Activated T-helper 1 cell treated with anti-CD3 and anti-CD28 coated beads, Interleukin-12 subunit alpha, Interleukin-12 subunit beta, Interleukin-2, Interleukin-4 antibody, amounts not matched to agents 30 ng/mL and 10 ng/mL and 1 ng/mL, durations not matched to agents 14 hours and 24 hours and 36 hours (primary cell): ENCODE measurements at regions of chr12 and their contacts with region 1.

Region 1: GRCh38 chr12:123150744-123151456 is at the start of gene PITPNM2:
- DNase-seq: peak; percentile 56
- H3K4me3 Mint-ChIP-seq: peak within 1 kb of the TSS; percentile 89
- H3K27ac Mint-ChIP-seq: peak within 1 kb of the TSS; percentile 90
- H3K4me1 Mint-ChIP-seq: peaks cover 41% of the 10 kb centered on the region
- H3K27me3 Mint-ChIP-seq: peaks cover 16% of the 10 kb centered on the region
- total RNA-seq, gene PITPNM2: 22.3 and 25.5 TPM in 2 replicates

Region 2: DNA sequence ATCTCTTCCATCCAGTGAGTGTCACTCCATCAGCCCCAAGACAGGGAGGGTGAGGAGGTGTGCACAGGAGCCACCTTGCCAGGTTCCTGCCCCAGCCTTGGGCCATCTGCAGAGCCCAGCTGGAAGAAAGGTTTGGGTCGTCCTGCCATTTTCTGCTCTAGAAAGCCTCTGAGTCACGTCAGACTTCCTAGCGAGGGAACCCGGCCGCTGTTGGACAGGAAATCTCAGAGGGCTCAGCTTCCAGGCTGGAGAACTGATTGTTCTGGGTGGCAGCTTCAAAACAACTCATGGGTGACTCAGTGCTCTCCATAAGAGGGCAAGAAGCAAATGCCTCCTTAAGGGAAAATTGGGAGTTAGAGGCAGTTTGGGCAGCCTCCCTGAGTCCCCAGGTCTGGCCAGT is 299.1 kb before region 1 on chr12:
- intact Hi-C with region 1: no loop called
- DNase-seq: no peak
- H3K4me3 Mint-ChIP-seq: no peak overlapping the region
- H3K27ac Mint-ChIP-seq: no peak overlapping the region
- H3K4me1 Mint-ChIP-seq: no peaks in the 10 kb centered on the region
- H3K27me3 Mint-ChIP-seq: no peaks in the 10 kb centered on the region

Region 3: GRCh38 chr12:122965851-122966722 is 184.8 kb before region 1 on chr12 and contains the start of gene ABCB9:
- intact Hi-C with region 1: no loop called
- DNase-seq: peak; percentile 84
- H3K4me3 Mint-ChIP-seq: peak within 1 kb of the TSS; percentile 37
- H3K27ac Mint-ChIP-seq: no peak within 1 kb of the TSS
- H3K4me1 Mint-ChIP-seq: peaks cover 12% of the 10 kb centered on the region
- H3K27me3 Mint-ChIP-seq: peaks cover 16% of the 10 kb centered on the region
- total RNA-seq, gene ABCB9: 3.8 and 4.4 TPM in 2 replicates

Region 4: DNA sequence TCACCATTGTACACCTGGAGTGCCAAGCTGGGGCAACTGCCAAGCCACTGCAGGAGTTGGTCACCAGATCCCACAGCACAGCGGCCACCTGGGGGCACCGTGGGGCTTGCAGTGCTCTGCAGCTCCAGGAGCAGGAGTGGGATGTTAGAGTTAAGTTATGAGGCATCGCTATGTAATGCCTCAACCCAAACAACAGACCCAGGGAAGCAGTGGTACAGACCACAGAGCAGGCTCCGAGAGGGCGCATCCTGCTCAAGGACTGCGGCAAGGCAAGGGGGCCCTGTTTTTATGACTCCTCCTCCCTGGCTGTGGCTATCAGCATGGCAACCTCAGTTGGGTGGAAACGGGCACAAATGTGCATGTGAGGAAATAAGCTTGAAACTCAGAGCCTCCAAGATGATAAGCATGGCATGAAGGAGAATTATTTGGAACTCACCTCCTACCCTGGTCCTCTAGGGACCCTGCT is 107.3 kb before region 1 on chr12:
- intact Hi-C with region 1: loop called (anchors 1 kb)
- DNase-seq: peak; percentile 60
- H3K4me3 Mint-ChIP-seq: no peak overlapping the region
- H3K27ac Mint-ChIP-seq: peak overlapping the region; percentile 71
- H3K4me1 Mint-ChIP-seq: peaks cover 22% of the 10 kb centered on the region
- H3K27me3 Mint-ChIP-seq: no peaks in the 10 kb centered on the region

Region 5: GRCh38 chr12:123106628-123107359 is 44.1 kb before region 1 on chr12:
- intact Hi-C with region 1: loop called (anchors 2 kb)
- DNase-seq: peak; percentile 73
- H3K4me3 Mint-ChIP-seq: peak overlapping the region; percentile 53
- H3K27ac Mint-ChIP-seq: peak overlapping the region; percentile 95
- H3K4me1 Mint-ChIP-seq: peaks cover 58% of the 10 kb centered on the region
- H3K27me3 Mint-ChIP-seq: no peaks in the 10 kb centered on the region

Region 6: GRCh38 chr12:123171967-123172366 is 21.1 kb after region 1 on chr12:
- intact Hi-C with region 1: no loop called
- DNase-seq: no peak
- H3K4me3 Mint-ChIP-seq: no peak overlapping the region
- H3K27ac Mint-ChIP-seq: no peak overlapping the region
- H3K4me1 Mint-ChIP-seq: peaks cover 13% of the 10 kb centered on the region
- H3K27me3 Mint-ChIP-seq: no peaks in the 10 kb centered on the region